ENCODE measurements at regions of chr1 and their contacts with region 1.

Region 1: DNA sequence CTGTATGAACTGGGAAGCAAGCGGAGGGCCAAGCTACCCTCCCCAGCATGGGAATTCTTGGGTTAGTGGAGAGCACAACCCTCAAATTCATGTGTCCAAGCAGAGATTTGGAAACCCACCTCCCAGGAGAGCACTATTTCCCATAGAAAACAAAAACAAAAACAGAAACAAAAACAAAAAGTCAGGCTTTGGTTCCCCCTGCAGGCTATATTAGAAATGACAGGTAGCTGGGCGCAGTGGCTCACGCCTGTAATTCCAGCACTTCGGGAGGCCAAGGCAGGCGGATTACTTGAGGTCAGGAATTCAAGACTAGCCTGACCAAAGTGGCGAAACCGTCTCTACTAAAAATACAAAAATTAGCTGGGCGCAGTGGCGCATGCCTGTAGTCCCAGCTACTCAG is 10.8 kb downstream of the MINDY1 start:
- DNase-seq: peak; percentile 65 to 92
- H3K4me3 ChIP-seq: no peak overlapping the region
- CTCF ChIP-seq: peak in 1 of 3 donors; percentile 97
- POLR2A ChIP-seq: no peak

Region 2: DNA sequence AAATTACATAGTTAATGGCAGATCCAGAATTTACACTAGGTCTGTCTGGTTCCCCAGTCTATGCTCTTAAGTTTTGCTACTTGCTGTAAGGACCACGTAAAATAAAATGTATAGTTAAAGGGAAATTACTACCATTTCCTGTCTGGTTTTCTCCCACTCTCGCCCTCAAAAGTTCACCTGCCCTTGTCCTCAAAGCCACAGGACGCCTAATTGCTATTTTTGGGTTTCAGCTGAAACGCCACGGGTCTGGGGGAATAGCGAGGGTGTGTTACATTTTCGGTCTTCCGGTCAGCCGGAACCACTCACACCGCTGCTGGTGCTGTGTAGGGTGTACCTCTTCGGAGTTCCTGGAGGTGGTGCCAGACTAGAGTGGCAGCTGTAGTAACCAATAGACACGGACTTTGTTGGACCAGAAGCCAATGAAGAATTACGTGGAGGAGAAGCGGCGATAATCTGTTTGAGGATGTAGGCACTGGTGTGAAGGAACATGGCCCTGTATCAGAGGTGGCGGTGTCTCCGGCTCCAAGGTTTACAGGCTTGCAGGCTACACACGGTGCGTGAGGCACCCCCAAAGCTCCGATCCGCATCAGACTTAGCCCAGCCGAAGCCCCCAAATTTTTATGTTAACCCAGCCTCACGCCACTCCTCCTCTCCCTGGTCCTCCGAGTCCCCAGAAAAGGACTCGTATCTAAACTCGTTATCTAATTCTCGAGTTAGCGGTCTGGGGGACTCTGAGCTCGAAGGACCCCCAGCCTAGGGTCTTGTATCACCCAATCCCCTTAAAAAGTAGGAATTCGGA is 508.7 kb before region 1 on chr1 and contains the start of gene TARS2:
- intact Hi-C with region 1: loop called (anchors 10 kb)
- DNase-seq: peak; percentile 98
- H3K4me3 ChIP-seq: peak within 1 kb of the TSS; percentile 50
- CTCF ChIP-seq: peak in 1 of 3 donors; percentile 48
- POLR2A ChIP-seq: no peak
- total RNA-seq, gene TARS2: 9.7 to 25.1 (median 16.5) TPM

Region 3: DNA sequence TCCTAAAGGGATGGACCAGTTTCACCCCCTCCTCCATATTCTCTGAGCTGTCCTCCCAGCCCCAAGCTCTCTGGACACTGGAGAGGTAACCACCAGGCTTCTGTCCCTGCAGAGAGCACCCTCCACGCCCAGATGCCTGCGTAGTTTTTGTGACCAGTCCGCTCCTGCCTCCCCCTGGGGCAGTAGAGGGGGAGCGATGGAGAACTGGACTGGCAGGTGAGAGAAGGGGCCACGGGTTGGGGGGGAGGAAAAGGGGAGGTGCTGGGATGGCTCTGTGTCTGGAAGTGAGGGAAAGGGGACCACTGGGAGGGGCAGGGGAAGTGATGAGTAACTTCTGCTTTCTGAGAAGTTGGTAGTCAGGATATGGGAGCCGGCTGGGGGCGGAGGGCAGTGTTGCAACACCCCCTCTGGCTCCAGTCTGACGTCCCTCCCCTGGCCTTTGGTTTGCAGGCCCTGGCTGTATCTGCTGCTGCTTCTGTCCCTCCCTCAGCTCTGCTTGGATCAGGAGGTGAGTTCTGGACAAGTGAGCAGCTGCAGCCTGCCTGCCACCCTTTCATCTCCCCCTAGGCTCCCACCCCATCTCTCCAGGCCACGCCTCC is 443.7 kb before region 1 on chr1:
- intact Hi-C with region 1: loop called (anchors 10 kb)
- DNase-seq: peak; percentile 93 to 97
- H3K4me3 ChIP-seq: no peak overlapping the region
- CTCF ChIP-seq: no peak
- POLR2A ChIP-seq: no peak

Region 4: DNA sequence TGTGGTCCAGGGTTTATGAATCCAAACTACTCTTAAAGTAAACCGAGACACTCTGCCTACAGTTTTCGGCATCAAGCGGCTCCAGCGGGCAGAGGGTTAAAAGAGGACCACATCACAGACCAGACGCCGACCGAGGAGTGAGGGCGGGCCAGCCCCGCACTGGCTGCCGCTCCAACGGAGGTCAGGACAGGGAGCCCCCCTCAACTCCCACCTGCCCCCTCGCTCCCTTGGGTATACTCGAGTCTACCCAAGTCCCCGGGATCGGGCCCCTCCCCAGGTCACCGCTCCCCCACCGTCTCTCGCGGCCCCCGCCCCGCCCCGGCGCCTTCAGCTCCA is 119.8 kb before region 1 on chr1:
- intact Hi-C with region 1: no loop called
- DNase-seq: no peak
- H3K4me3 ChIP-seq: peak overlapping the region; percentile 83
- CTCF ChIP-seq: no peak
- POLR2A ChIP-seq: no peak

Region 5: GRCh38 chr1:151165738-151166505 is 170.0 kb after region 1 on chr1 and contains the starts of genes LYSMD1 and SCNM1:
- intact Hi-C with region 1: no loop called
- DNase-seq: peak; percentile 98 to 99
- H3K4me3 ChIP-seq: peak within 1 kb of the TSS; percentile 65
- CTCF ChIP-seq: no peak
- POLR2A ChIP-seq: no peak
- total RNA-seq, gene LYSMD1: 9.2 to 16.1 (median 11.8) TPM
- total RNA-seq, gene SCNM1: 24.1 to 38.8 (median 27.3) TPM